AG04449 (cell line): ENCODE measurements at regions of chr11 and their contacts with region 1.

Region 1: GRCh38 chr11:14907411-14908213 is 15.6 kb upstream of the CYP2R1 start:
- DNase-seq: no peak
- H3K4me3 ChIP-seq: no peak overlapping the region
- CTCF ChIP-seq: peak; percentile 68

Region 2: GRCh38 chr11:14882196-14882595 is 25.4 kb before region 1 on chr11:
- CTCF ChIA-PET with region 1: interaction called, 11 read pairs
- POLR2A ChIA-PET with region 1: no interaction called
- DNase-seq: no peak
- H3K4me3 ChIP-seq: no peak overlapping the region
- CTCF ChIP-seq: no peak

Region 3: DNA sequence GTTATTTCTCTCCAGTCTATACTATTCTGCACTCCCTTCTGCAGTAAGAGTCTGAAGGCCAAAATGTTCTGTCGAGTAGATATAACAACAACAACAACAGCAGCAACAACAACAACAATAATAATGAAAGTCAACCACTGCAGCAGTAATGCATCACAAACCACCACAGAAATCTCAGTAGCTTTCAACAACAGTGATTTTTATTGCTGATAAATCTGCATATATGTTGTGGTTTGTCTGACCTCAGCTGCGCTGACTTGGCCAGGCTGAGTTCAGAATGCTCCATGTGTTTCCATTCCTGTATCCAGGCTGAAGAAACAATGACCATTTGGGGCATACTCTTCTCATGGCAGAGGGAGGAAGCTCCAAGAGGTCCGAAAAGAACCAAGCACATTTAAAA is 16.7 kb after region 1 on chr11:
- CTCF ChIA-PET with region 1: interaction called, 82 read pairs
- POLR2A ChIA-PET with region 1: no interaction called
- DNase-seq: no peak
- H3K4me3 ChIP-seq: no peak overlapping the region
- CTCF ChIP-seq: no peak

Region 4: DNA sequence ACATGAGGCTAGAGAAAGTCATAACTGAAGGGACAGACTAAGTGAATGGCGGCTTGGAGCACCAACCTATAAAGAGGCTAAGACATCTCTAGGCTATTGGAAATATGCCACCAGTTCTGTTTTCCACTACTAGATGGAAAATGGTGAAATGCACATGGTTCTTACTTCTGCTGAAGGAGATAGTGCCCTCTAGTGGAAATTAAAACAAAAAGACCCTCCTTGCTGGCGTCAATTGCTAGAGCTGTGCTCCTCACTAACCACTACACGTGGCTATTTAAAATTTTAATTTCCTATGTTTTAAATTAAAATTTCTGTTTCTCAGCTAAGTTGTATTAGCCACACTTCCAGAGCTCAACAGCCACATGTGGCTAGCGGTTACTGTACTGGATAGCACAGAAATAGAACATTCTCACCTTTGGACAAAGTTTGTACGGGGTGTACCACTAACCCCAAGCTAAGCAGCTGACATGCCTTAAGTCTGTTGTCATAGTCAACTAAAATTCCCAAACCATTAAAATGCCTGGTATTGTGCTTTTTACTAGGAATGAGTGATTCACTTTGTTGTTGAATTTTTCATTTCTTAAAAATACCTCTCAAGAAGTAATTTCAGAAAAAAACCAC is 98.6 kb after region 1 on chr11:
- CTCF ChIA-PET with region 1: interaction called, 22 read pairs
- POLR2A ChIA-PET with region 1: no interaction called
- DNase-seq: no peak
- H3K4me3 ChIP-seq: no peak overlapping the region
- CTCF ChIP-seq: peak; percentile 17

Region 5: GRCh38 chr11:15208378-15209222 is 301.0 kb after region 1 on chr11:
- CTCF ChIA-PET with region 1: interaction called, 79 read pairs
- POLR2A ChIA-PET with region 1: no interaction called
- DNase-seq: no peak
- H3K4me3 ChIP-seq: no peak overlapping the region
- CTCF ChIP-seq: peak; percentile 95